ENCODE measurements at regions of chr7 and their contacts with region 1.

Region 1: DNA sequence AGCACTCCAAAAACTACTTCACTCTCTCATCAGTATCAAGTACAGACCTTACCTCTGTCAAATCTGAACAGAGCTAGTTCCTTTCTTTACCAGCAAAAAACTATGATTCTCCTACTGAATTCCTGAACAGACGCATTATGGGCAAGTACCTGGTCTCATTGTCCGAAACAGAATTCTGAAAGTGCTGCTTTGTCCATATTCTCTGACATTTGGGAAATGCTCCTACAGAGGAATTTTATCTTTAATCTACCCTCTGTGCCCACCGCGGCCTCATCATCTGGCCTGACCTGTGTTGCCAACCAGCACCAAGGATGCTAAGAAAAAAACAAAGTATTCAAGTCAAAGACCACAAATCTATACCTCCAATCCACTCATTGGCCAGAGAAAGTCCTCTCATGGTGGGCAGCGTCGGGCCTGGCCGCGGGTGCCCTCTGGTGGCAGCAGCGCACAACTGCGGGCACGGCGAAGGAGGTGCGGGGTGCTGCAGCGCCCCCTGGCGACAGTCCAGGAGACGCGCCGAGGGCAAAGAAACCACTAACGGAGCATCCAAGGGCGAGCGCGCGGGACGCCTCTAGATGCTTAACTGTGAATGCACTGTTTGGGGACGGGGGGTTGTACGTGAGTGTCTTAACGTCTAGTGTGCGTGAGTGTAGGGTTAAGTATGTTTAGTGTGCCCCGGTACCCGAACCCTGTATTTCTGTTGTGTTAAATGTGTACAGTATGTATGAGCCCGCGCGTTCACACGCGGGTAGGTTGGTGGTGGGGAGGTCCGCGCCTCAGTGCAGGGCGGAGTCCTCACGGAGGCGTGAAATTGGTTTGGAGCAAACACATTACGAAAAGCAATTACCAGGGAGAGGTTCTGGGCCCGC is 5.0 kb upstream of the GBX1 start:
- DNase-seq: peak; percentile 72 to 90 (median 81)
- ATAC-seq: peak; percentile 55 to 77 (median 64)
- H3K4me3 ChIP-seq: no peak overlapping the region
- H3K27ac ChIP-seq: peak overlapping the region in 2 of 12 donors; percentile 4 to 27
- H3K4me1 ChIP-seq: peaks cover 0 to 28% (median 4%) of the 10 kb centered on the region in 12 donors
- H3K27me3 ChIP-seq: peaks cover 0 to 56% (median 12%) of the 10 kb centered on the region in 9 donors
- CTCF ChIP-seq: peak; percentile 100
- POLR2A ChIP-seq: no peak

Region 2: DNA sequence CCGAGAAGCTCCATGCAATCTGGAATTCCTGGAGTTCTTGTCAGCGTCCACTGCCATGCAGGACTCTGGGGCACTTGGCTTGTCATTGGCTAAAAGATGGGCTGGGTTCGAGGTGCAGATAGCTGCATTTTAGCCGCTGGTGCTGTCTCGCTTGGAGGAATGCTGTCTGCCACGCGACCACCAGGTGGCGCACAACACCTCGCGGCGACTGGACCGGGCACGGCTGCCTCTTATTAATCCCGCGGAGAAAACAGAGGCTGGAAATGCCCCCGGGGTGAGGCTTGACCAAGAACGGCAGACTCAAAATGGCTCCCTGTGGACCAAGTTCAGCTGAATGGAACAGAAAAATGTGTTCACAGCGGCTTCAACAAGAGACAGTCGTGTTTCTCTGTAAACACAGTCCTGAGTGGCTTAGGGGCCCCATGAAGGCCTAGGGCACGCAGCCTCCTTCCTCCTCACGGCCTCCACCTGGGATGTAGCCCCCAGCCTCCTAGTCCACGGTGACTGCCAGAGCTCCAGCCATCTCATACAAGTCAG is 274.0 kb before region 1 on chr7:
- intact Hi-C with region 1: loop called in 1 of 10 experiments (anchors 10 kb)
- DNase-seq: peak; percentile 67 to 90 (median 80)
- ATAC-seq: peak in 3 of 4 donors; percentile 64 to 80 (median 74)
- H3K4me3 ChIP-seq: no peak overlapping the region
- H3K27ac ChIP-seq: no peak overlapping the region
- H3K4me1 ChIP-seq: peaks cover 0 to 33% (median 4%) of the 10 kb centered on the region in 12 donors
- H3K27me3 ChIP-seq: peaks cover 0 to 38% (median 4%) of the 10 kb centered on the region in 9 donors
- CTCF ChIP-seq: peak; percentile 85 to 96 (median 92)
- POLR2A ChIP-seq: no peak

Region 3: DNA sequence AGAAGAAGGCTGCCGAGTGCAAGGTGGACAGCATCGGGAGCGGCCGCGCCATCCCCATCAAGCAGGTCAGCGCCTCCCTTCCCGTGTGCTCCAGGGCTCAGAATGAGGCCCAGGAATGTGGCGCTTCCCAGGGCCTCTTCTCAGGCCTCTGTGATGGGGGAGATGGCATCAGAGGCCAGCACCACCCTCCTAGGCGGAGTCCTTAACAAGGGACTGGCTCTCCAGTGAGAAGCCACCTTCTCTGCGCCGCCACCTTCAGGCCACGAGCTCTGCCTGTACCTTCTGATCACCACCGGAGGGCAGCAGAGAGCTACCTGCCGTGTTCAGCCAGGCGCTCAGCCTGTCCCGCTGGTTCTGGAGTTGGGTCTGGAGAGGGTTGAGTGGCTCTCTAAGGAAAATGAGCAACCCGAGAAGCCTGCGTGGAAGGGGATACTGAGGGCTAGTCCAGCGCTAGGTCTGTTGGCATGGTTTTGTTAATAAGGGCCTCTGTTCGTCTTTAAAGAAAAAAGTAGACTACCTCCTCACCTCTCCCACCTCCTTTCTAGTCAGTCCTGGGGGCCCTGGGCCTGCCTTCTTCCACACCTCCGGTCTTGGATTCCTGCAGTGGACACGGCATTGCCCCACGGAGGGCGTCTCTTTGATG is 48.6 kb before region 1 on chr7:
- intact Hi-C with region 1: loop called (anchors 1 to 2 kb)
- DNase-seq: peak; percentile 83 to 90 (median 85)
- ATAC-seq: peak; percentile 57 to 79 (median 74)
- H3K4me3 ChIP-seq: no peak overlapping the region
- H3K27ac ChIP-seq: no peak overlapping the region
- H3K4me1 ChIP-seq: peaks cover 0 to 32% (median 9%) of the 10 kb centered on the region in 12 donors
- H3K27me3 ChIP-seq: no peaks in the 10 kb centered on the region
- CTCF ChIP-seq: peak; percentile 96 to 99 (median 98)
- POLR2A ChIP-seq: no peak

Region 4: GRCh38 chr7:151152643-151153513 is 19.6 kb before region 1 on chr7:
- intact Hi-C with region 1: no loop called
- DNase-seq: no peak
- ATAC-seq: no peak
- H3K4me3 ChIP-seq: no peak overlapping the region
- H3K27ac ChIP-seq: no peak overlapping the region
- H3K4me1 ChIP-seq: peaks cover 0 to 4% (median 0%) of the 10 kb centered on the region in 12 donors
- H3K27me3 ChIP-seq: peaks cover 0 to 29% (median 7%) of the 10 kb centered on the region in 9 donors
- CTCF ChIP-seq: no peak
- POLR2A ChIP-seq: no peak

Region 5: DNA sequence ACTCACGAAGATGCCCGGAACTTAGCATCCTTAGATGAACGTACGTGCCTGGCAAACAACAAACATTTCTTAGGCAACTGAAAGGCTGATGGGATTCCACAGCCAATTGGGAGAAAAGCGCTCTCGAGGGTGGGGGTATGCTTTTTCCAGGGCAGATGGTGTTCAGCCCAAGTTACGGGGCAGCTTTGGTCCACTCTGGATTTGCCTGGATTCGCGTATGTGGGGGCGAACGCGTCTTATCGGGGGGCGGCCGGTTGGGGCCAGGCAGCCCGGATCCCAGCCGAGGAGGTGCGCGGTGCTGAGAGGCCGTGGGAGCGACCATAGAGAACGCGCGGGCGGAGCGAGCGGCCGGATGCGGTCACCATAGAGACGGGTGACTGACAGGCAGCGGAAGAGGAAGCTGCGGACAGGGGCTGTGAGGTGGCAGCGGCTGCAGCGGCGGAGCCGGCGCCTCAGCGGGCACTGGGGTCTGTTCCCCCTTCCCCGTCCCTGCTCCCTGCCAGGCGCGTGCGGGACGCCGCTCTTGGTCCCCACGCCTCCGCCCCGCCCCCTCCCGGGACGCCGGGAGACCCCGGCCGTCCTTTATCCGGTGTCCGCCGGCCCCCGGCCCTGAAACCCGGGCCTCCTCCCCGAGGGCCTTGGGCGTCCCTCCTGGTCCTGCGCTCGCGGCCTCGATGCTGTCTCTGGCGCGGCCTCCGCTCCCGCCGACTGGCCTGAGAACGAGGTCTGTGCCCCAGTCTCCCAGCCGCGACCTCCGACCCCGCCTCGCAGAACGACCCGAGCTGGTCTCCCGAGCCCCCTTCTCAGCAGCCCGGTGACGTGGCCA is 59.8 kb after region 1 on chr7 and contains the start of gene CHPF2:
- intact Hi-C with region 1: loop called in 1 of 10 experiments (anchors 5 kb)
- DNase-seq: peak; percentile 93 to 96 (median 96)
- ATAC-seq: peak; percentile 89 to 95 (median 94)
- H3K4me3 ChIP-seq: peak within 1 kb of the TSS; percentile 85 to 98 (median 96)
- H3K27ac ChIP-seq: peak within 1 kb of the TSS; percentile 59 to 90 (median 86)
- H3K4me1 ChIP-seq: peaks cover 0 to 42% (median 26%) of the 10 kb centered on the region in 12 donors
- H3K27me3 ChIP-seq: no peaks in the 10 kb centered on the region
- CTCF ChIP-seq: no peak
- POLR2A ChIP-seq: peak; percentile 70 to 90
- total RNA-seq, gene CHPF2: 16.6 to 31.9 (median 18.3) TPM

Region 6: DNA sequence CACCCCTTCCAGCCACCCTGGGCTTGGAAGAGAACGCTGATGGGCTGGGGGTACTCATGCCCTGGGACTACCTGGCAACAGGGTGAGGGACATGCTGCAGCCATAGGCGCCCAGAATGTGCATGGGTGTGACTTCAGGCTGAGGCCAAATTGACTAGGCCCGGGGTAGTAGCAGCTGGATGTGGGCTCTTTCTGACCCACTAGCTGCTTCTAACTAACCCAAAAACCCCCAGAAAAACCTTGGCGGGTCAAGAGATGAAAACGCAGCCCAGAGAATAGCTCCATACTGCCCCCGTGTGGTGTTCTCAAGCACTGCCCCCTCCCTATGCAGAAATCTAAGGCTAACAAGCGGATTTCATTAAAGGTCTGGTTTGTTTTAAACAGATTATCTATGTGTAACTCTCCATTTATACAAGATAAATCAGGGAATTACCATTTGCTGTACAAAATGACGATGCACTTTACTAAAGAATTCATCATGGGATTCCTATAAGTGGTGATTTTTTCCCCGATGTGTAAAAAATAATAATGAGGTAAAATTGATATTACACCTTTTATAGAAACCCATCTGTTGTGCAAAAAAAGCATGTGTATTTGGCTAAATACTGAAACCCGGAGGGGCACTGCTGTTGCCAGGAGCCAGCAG is 71.8 kb after region 1 on chr7:
- intact Hi-C with region 1: loop called in 1 of 10 experiments (anchors 5 kb)
- DNase-seq: peak in 1 of 5 donors; percentile 35
- ATAC-seq: no peak
- H3K4me3 ChIP-seq: peak overlapping the region in 1 of 12 donors; percentile 80
- H3K27ac ChIP-seq: no peak overlapping the region
- H3K4me1 ChIP-seq: peaks cover 4 to 75% (median 45%) of the 10 kb centered on the region in 12 donors
- H3K27me3 ChIP-seq: peaks cover 0 to 39% (median 7%) of the 10 kb centered on the region in 9 donors
- CTCF ChIP-seq: peak; percentile 75 to 90 (median 83)
- POLR2A ChIP-seq: no peak

Region 7: GRCh38 chr7:151261529-151261928 is 89.0 kb after region 1 on chr7:
- intact Hi-C with region 1: no loop called
- DNase-seq: peak in 2 of 5 donors; percentile 50 to 51
- ATAC-seq: peak in 3 of 4 donors; percentile 21 to 58 (median 25)
- H3K4me3 ChIP-seq: no peak overlapping the region
- H3K27ac ChIP-seq: no peak overlapping the region
- H3K4me1 ChIP-seq: peaks cover 0 to 16% (median 3%) of the 10 kb centered on the region in 12 donors
- H3K27me3 ChIP-seq: peaks cover 0 to 24% (median 0%) of the 10 kb centered on the region in 9 donors
- CTCF ChIP-seq: no peak
- POLR2A ChIP-seq: no peak

Region 8: DNA sequence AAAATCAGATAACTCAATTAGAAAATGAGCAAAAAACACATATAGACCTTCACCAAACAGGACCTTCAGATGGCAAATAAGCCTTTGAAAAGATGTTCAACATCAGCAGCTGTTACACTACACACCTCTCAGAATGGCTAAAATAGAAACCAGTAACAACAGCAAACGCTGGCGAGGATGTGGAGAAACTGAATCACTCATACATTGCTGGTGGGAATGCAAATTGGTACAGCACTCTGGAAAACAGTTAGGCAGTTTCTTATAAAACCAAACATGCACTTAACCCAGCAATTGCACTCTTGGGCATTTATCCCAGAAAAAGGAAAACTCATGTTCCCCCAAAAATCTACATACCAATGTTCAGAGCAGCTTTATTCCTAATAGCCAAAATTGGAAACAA is 113.6 kb after region 1 on chr7:
- intact Hi-C with region 1: no loop called
- DNase-seq: no peak
- ATAC-seq: no peak
- H3K4me3 ChIP-seq: no peak overlapping the region
- H3K27ac ChIP-seq: no peak overlapping the region
- H3K4me1 ChIP-seq: no peaks in the 10 kb centered on the region
- H3K27me3 ChIP-seq: peaks cover 0 to 25% (median 4%) of the 10 kb centered on the region in 9 donors
- CTCF ChIP-seq: no peak
- POLR2A ChIP-seq: no peak

Region 9: DNA sequence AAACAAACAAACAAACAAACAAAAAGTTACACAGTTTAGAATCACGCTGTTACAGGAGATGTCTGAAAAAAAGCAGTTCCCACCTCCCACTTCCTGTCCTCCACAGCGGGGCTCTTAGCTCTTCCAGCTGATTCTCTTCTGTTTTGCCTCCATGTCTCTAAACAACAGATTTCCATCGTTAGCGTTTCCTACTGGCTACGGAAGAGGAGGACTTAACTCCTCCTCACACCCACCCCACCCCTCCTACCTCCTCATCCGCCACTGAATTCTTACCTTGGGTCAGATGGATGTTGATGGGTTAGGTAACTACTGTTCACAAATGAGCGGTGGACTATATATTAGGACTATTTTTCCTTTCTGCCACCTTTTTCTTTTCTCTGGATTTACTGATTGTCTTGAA is 132.3 kb after region 1 on chr7:
- intact Hi-C with region 1: loop called in 6 of 10 experiments (anchors 5 to 10 kb)
- DNase-seq: no peak
- ATAC-seq: no peak
- H3K4me3 ChIP-seq: peak overlapping the region in 2 of 12 donors; percentile 19 to 21
- H3K27ac ChIP-seq: no peak overlapping the region
- H3K4me1 ChIP-seq: peaks cover 0 to 12% (median 4%) of the 10 kb centered on the region in 12 donors
- H3K27me3 ChIP-seq: peaks cover 0 to 39% (median 13%) of the 10 kb centered on the region in 9 donors
- CTCF ChIP-seq: no peak
- POLR2A ChIP-seq: no peak